Upper lobe of right lung (tissue), 1 donor: ENCODE measurements at regions of chr21 and their contacts with region 1.

Region 1: DNA sequence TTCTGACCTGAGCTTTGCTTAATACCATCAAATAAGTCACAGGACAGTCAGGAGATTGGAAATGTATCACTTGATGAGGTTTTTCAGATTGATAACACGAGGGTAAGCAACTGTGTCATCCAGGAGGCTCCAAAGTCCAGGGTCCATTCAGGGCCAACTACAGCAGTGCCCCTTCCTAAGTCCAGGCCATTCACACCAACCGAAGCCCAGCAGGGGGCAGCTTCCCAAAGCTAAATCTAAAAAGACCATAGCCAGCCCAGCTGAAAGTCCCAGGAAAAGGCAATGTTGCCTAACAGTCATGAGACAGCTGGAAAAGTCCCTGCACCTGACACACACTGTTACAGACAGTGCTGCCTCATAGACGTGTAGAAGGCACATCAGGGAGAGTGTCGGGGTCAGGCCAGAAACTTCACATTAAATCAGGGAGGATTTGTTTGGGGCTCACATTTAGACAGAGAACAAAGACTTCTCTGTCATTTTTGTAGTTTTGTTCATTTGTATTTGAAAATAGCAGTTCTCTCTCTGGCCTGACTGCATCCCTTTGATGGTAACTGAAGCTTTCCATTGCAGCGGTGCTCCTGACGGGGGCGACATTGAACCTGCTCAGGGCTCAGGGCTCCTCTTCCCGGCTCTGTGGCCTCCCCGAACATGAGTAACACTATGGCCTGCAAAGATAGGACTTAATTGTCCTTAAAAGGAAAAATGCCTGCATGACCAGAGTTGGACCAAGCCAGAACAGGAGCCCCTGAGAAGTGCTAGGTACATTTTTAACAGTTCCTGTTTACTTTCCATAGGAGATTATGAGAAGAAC is 200.4 kb downstream of the NRIP1 start:
- DNase-seq: peak; percentile 79
- ATAC-seq: peak; percentile 94
- H3K4me3 ChIP-seq: no peak overlapping the region
- H3K27ac ChIP-seq: no peak overlapping the region
- H3K4me1 ChIP-seq: no peaks in the 10 kb centered on the region
- H3K27me3 ChIP-seq: no peaks in the 10 kb centered on the region
- CTCF ChIP-seq: peak; percentile 50

Region 2: GRCh38 chr21:15483138-15483780 is 618.8 kb after region 1 on chr21:
- intact Hi-C with region 1: loop called (anchors 5 kb)
- DNase-seq: peak; percentile 88
- ATAC-seq: peak; percentile 100
- H3K4me3 ChIP-seq: no peak overlapping the region
- H3K27ac ChIP-seq: no peak overlapping the region
- H3K4me1 ChIP-seq: no peaks in the 10 kb centered on the region
- H3K27me3 ChIP-seq: no peaks in the 10 kb centered on the region
- CTCF ChIP-seq: peak; percentile 93